ENCODE measurements at regions of chr9 and their contacts with region 1.

Region 1: GRCh38 chr9:112945620-112946208 is 55.0 kb upstream of the SLC46A2 start:
- DNase-seq: no peak
- H3K4me3 ChIP-seq: no peak overlapping the region
- H3K27ac ChIP-seq: no peak overlapping the region
- H3K4me1 ChIP-seq: no peaks in the 10 kb centered on the region
- H3K27me3 ChIP-seq: peaks cover 0 to 11% of the 10 kb centered on the region in 2 donors
- CTCF ChIP-seq: no peak
- POLR2A ChIP-seq: no peak

Region 2: DNA sequence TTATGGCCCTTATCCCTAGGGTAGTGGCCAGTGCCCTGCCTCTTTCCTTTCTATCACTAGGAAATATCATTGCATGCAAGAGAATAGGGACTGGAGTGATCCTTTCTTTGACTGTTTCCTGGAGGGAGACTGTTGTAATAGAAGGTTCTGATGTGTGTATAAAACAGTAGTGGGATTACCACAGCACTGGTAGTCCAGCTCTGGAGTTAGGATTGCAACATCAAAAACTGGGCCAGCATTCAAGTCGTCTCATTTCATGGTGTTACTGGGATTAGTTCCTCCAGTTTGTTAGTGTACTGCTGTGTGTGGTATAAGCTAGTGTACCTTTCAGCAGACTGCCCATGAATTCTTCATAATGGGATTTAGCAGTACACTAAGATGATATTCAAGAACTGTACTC is 413.3 kb before region 1 on chr9:
- intact Hi-C with region 1: loop called (anchors 5 kb)
- DNase-seq: no peak
- H3K4me3 ChIP-seq: no peak overlapping the region
- H3K27ac ChIP-seq: no peak overlapping the region
- H3K4me1 ChIP-seq: no peaks in the 10 kb centered on the region
- H3K27me3 ChIP-seq: no peaks in the 10 kb centered on the region
- CTCF ChIP-seq: no peak
- POLR2A ChIP-seq: no peak

Measured in breast epithelium (tissue), 4 donors.